Activated CD4-positive, alpha-beta memory T cell treated with anti-CD3 and anti-CD28 coated beads, Interleukin-2, amount 10 ng/mL, durations not matched to agents 7 days and 5 days (primary cell): ENCODE measurements at regions of chr3 and their contacts with region 1.

Region 1: DNA sequence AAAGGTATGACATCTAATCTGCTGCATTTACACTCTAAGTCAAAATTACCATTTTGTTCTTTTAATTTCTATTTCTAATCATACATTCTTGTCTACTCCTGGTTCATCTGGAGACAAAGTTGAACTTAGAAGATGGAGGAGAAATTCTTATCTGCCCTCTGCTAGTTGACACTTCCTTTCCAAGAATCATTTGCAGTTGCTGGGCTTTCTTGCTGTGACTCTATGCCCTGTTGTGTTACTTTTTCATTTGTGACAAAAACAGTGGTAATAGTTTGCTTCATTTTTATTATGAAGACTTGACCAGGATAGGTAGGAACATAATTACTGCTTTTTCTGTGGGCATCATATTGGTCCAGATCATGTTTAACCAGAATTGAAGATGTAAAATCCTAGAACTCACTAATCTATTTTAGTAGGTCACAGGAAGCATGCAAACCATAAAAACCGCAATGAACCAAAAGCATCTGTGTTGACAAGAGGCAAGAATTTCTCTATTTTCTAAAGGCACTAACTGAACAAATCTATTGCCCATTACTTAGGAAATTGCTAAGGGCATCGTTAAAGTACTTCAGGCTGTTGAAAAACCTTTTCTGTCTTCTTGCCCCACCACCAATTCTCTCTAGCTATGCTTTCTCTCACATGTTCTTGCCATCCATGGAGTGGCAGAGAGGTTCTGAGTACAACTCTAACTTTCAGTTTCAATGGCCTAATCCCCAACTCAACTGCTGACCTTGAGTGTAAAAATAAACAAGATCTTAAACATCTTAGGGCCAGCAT is 4.2 kb upstream of the CCR2 start:
- DNase-seq: no peak
- H3K4me3 Mint-ChIP-seq: peak overlapping the region; percentile 49
- H3K27ac Mint-ChIP-seq: peak overlapping the region; percentile 96
- H3K4me1 Mint-ChIP-seq: peaks cover 77% of the 10 kb centered on the region
- H3K27me3 Mint-ChIP-seq: peaks cover 15% of the 10 kb centered on the region

Region 2: GRCh38 chr3:46089237-46090011 is 260.2 kb before region 1 on chr3:
- CTCF ChIA-PET with region 1: no interaction called
- POLR2A ChIA-PET with region 1: no interaction called
- DNase-seq: peak; percentile 29
- H3K4me3 Mint-ChIP-seq: no peak overlapping the region
- H3K27ac Mint-ChIP-seq: no peak overlapping the region
- H3K4me1 Mint-ChIP-seq: peaks cover 59% of the 10 kb centered on the region
- H3K27me3 Mint-ChIP-seq: peaks cover 27% of the 10 kb centered on the region

Region 3: GRCh38 chr3:46208167-46208704 is 141.4 kb before region 1 on chr3 and contains the start of gene CCR1:
- CTCF ChIA-PET with region 1: interaction called, 7 read pairs
- POLR2A ChIA-PET with region 1: interaction called, 10 read pairs
- DNase-seq: peak; percentile 78
- H3K4me3 Mint-ChIP-seq: peak within 1 kb of the TSS; percentile 71
- H3K27ac Mint-ChIP-seq: peak within 1 kb of the TSS; percentile 75
- H3K4me1 Mint-ChIP-seq: peaks cover 54% of the 10 kb centered on the region
- H3K27me3 Mint-ChIP-seq: no peaks in the 10 kb centered on the region
- total RNA-seq, gene CCR1: 20.0 to 20.7 TPM

Region 4: DNA sequence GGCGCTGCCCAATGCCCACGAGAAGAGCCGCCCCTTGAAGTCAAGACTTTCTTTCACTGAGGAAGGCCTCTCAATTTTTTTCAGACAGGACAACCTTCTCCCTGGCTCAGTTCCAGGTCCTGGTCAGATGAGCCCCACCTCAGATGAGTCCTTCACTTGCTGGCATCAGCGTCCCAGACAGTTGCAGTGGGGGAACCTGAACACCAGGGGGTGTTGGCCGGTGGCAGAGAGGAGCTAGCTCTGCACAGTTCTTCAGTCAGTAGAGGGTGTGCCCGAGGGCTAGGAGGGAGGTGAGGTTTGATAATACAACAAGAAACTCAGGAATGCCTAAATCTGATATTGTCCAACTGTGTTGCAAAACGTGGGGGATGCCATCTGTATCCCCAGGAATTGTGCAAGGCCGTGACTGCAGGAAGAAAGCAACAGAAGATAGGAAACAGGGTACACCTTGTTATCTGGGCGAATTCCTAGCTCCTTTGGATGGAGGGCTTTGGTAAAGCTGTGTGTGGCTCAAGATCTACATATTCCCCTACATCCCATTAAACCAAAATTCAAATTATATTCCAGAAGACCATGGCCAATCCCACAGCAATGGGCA is 73.1 kb before region 1 on chr3:
- CTCF ChIA-PET with region 1: interaction called, 12 read pairs
- POLR2A ChIA-PET with region 1: interaction called, 46 read pairs
- DNase-seq: peak; percentile 85
- H3K4me3 Mint-ChIP-seq: no peak overlapping the region
- H3K27ac Mint-ChIP-seq: peak overlapping the region; percentile 41
- H3K4me1 Mint-ChIP-seq: peaks cover 57% of the 10 kb centered on the region
- H3K27me3 Mint-ChIP-seq: peaks cover 36% of the 10 kb centered on the region

Region 5: DNA sequence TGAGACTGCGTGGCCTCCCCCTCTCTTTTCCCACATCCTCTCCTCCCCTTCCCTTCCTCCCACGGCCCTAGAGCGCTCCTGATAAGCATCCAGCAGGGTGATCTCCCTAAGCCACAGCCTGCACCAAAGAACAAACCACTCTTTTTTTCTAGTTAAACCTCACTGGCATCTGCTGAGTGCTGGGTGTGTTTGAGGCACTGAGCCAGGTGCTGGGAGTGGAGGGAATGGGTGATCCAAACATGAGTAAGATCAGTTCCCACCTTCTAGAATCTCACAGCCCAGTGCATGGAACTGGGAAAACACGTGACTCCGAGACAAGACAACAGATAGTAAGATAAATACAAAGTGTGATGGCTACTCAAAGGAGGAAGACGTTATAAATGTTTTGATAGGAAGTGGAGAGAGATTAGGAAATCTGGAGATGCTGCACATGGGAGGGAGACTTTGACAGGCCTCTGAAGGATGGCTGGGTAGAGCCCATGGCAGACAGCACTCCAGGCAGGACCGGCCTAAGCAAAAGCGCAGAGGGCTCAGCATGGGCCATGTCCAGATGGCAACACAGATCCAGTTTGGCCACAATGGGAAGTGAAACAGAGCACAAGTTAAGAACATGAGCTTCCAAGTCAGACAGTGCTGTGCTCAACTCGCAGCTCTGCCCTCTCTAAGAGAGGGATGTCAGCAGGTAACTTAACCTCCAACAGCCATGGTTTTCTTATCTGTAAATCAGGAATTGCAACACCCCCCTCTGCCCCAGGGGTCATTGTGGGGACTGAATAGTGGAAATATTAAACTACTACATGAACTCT is 51.8 kb before region 1 on chr3:
- CTCF ChIA-PET with region 1: interaction called, 3 read pairs
- POLR2A ChIA-PET with region 1: interaction called, 207 read pairs
- DNase-seq: no peak
- H3K4me3 Mint-ChIP-seq: no peak overlapping the region
- H3K27ac Mint-ChIP-seq: peak overlapping the region; percentile 93
- H3K4me1 Mint-ChIP-seq: peaks cover 93% of the 10 kb centered on the region
- H3K27me3 Mint-ChIP-seq: peaks cover 3% of the 10 kb centered on the region

Region 6: GRCh38 chr3:46359733-46360493 is 10.2 kb after region 1 on chr3:
- CTCF ChIA-PET with region 1: interaction called, 130 read pairs
- POLR2A ChIA-PET with region 1: interaction called, 414 read pairs
- DNase-seq: no peak
- H3K4me3 Mint-ChIP-seq: peak overlapping the region; percentile 31
- H3K27ac Mint-ChIP-seq: peak overlapping the region; percentile 62
- H3K4me1 Mint-ChIP-seq: peaks cover 78% of the 10 kb centered on the region
- H3K27me3 Mint-ChIP-seq: peaks cover 31% of the 10 kb centered on the region